Lower leg skin (tissue), 4 donors: ENCODE measurements at regions of chr2 and their contacts with region 1.

Region 1: DNA sequence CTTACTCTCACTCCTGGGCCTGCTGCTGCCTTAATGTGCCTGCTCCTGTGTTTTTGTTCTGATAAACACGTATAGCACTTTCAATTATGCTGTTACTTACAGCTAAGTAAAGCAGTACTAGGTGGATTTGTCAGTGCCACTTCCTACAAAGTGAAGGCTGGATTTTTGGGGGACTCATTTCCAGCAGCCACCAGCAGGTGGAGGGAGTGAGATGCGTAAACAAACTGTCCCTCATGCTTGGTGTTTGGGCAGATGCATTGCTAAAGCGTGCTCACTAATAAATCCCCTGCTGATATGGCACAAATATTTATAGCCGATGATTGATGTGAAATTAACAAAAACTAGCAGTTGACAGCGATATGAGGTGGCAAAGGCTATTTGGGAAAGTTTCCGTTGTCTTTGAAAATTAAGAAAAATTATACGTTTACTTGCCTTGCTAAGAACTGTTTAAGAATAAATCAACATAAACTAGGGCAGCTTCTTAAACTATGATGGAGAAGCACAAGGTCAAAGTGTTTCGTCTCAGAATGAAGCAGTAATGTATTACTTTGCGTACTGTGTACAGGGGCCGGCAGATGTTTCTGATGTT is 101.7 kb downstream of the AGAP1 start:
- DNase-seq: peak; percentile 76 to 95
- H3K4me3 ChIP-seq: no peak overlapping the region
- CTCF ChIP-seq: peak in 1 of 3 donors; percentile 46
- POLR2A ChIP-seq: no peak

Region 2: DNA sequence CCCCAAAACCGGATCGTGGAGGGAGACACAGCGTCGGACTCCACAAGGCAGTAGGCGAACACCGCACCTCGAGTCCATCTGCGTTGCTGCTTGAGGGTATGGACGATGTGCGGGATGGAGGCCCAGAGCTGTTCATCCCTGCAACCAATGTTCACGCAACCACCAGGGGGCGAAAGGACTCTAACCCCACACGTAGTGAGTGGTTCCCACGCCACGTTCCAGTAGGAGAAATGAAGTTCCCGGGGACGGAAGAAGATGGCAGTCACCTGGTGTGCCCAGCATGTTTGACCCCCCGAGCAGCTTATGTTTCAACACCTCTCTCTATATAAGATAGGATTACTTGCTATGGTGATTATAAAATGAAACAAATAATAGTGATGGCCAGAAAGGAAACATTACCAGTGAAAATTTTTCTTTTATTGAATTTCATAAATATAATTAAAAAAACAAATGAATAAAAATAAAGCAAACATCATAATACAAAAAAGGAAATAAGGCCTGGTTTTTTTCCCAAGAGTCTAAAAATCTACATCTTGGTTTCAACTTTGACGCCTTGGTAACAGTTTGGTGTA is 459.4 kb before region 1 on chr2:
- intact Hi-C with region 1: loop called (anchors 5 kb)
- DNase-seq: peak; percentile 57 to 91
- H3K4me3 ChIP-seq: no peak overlapping the region
- CTCF ChIP-seq: peak in 1 of 3 donors; percentile 67
- POLR2A ChIP-seq: no peak

Region 3: DNA sequence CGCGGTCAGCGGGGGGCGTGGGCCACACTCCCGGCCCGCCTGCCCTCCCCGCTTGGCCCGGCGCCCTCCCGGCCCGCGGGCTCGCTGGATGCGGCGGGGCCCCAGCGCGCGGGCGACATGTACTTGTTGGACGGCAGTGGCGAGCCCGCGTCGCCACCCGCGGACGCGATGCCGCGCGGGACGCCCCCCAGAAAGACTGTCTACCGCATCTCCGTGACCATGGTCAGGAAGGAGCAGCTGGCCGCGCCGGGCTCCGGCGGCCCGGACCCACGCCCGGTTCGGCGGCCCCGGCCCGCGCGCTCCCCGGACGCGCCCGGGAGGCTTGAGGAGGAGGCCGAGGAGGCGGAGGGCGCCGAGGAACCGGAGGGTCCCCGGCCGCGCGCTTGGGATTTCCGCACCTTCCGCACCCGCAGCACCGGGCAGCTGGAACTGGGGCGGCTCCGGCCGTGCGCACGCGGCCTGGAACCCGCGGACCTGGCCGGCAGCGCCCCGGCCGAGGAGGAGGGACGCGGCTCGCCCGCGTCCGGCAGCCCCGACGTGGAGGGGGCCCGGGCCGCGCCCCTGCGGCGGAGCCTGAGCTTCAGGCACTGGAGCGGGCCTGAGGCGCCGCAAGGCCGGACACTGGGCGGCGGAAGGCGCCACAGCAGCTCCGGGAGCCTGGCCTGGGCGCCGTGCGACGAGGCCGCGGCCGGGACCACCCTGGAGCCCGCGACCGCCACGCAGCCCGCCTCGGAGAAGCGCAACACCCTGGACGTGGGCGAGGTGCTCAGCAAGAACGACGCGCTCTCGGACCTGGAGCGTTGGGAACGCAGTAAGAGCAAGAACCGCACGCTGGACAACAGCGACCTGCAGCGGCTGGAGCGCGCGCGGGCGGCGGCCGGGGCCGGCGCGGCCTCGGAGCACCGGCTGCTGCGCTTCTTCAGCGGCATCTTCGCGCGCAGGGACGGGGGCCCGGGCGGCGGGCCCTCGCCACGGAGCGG is 74.8 kb after region 1 on chr2:
- intact Hi-C with region 1: loop called (anchors 5 kb)
- DNase-seq: peak in 1 of 2 donors; percentile 93
- H3K4me3 ChIP-seq: peak overlapping the region; percentile 38
- CTCF ChIP-seq: no peak
- POLR2A ChIP-seq: no peak

Region 4: GRCh38 chr2:235746257-235747084 is 151.0 kb after region 1 on chr2:
- intact Hi-C with region 1: loop called (anchors 5 kb)
- DNase-seq: peak in 1 of 2 donors; percentile 67
- H3K4me3 ChIP-seq: no peak overlapping the region
- CTCF ChIP-seq: peak in 1 of 3 donors; percentile 79
- POLR2A ChIP-seq: no peak

Region 5: DNA sequence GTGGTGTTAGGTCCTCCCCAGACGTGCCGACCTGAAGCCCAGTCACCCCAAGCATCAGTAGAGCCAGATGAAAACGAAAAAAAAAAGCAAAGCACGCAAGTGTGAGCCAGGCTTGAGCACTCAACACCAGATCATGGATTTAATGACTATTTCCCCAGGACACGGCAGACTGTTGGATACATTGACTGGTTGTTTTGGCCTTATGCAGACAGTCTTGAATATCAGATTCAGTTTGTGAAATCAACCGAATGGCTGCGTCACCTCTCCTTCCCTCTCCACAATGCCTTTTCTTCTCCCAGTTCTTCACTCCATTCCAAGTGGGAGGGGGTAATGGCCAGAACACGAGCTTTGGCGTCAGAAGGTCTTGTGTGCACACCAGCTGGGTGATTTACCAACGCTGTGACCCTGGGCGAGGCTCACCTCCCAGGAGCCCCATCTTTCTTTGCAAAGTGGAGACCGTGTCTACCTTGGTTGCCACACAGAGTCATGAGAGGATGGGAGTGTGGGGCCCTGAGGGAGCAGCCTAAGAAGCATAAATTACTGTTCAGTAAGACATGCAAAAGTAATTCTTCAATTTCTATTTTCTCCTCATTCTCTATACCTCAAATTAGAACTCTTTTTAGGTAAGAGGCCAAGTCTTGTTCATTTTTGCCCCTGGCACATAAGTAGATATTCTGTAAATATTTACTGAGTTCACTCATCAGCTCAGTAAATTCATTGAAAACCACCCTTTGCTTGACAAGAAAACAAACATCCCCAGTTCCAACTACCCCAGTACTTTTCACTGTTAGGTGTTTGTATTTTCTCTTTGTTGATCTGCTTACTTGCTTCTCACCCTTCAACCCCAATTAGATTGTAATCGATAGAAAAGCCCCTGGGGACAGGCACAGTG is 1309.1 kb after region 1 on chr2:
- intact Hi-C with region 1: no loop called
- DNase-seq: peak in 1 of 2 donors; percentile 84
- H3K4me3 ChIP-seq: no peak overlapping the region
- CTCF ChIP-seq: no peak
- POLR2A ChIP-seq: no peak

Region 6: GRCh38 chr2:237196866-237197618 is 1601.5 kb after region 1 on chr2:
- intact Hi-C with region 1: no loop called
- DNase-seq: peak; percentile 13 to 70
- H3K4me3 ChIP-seq: no peak overlapping the region
- CTCF ChIP-seq: no peak
- POLR2A ChIP-seq: no peak